Sciatic nerve (tissue), 2 donors: ENCODE measurements at regions of chr15 and their contacts with region 1.

Region 1: GRCh38 chr15:89026167-89026566 is 62.1 kb upstream of the ABHD2 start:
- DNase-seq: no peak
- ATAC-seq: no peak

Region 2: DNA sequence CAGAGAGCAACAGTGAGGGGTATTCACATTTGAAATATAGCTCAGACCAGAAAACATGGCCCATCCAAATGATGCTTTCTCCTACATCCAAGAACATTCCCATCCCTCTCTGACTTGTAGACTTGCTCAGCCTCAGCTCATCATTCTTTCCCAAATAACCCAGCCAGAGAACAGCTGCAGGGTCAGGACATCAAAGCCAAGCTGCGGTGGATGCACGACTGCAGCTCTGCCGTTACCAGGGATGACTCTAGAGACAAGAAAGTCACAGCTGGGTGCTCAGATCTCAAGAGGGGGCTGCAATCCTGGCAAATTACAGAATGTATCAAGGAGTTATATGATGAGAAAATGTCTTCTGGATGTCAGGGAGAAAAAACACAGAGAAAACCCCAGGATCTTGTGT is 1713.9 kb before region 1 on chr15:
- intact Hi-C with region 1: loop called (anchors 5 kb)
- DNase-seq: no peak
- ATAC-seq: no peak